ENCODE measurements at regions of chr4 and their contacts with region 1.

Region 1: DNA sequence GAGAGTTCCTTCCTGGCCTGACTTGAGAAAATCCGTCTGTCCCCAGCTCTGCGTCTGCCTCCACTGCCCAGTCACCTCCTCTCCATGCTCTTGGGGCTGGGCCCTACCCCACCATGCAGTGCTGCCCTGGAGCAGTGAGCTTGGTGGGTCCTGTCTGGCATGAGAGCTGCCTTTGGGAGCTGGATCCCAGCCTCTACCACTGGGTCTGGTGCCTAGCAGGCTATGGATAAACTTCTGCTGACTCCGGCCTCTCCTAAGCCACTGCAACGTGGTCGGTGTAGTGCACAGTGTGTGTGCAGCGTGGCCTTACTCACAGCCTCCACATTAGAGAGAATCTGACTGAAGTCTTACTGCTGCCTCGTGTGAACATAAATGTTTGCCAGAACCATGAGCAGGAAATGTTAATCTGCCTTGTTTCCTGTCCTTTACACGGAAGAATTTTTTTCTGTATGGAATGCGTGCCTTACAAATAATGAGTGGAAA is 47.6 kb downstream of the HTT start:
- DNase-seq: no peak
- H3K4me3 Mint-ChIP-seq: peak overlapping the region; percentile 45
- H3K27ac Mint-ChIP-seq: peak overlapping the region; percentile 70
- H3K4me1 Mint-ChIP-seq: peaks cover 20% of the 10 kb centered on the region
- H3K27me3 Mint-ChIP-seq: no peaks in the 10 kb centered on the region

Region 2: DNA sequence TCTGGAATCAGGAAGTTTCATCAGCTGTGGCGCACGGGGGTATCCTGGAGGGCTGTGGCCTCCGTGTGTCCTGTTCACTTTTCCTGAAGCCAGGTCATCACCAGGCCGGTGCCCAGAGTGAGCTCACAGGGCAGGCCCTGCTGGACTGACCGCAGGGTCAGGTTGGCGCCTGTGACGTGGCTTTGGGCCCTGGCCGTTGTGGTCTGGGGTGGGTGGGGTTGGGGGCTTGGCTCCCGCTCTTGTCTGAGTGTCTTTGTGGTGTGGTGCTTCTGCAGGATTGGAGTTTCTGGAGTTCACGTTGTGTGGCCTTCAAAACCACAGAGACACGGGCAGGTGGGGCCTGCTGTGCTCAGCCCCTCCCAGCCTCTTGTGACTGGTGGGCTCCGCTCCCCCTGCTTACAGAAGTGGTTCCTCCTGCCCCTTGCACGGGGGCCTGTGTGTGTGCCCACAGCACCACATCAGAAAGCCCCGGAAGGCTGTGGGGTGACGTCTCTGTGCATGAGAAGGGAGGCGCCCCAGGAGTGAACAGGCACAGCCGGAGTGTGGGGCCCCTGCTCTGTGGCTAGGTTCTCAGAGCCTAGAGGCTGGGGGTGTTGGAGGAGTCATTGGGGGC is 180.2 kb after region 1 on chr4:
- intact Hi-C with region 1: loop called (anchors 2 kb)
- DNase-seq: peak; percentile 62
- H3K4me3 Mint-ChIP-seq: peak overlapping the region; percentile 62
- H3K27ac Mint-ChIP-seq: peak overlapping the region; percentile 38
- H3K4me1 Mint-ChIP-seq: peaks cover 30% of the 10 kb centered on the region
- H3K27me3 Mint-ChIP-seq: peaks cover 15% of the 10 kb centered on the region